ENCODE measurements at regions of chr9 and their contacts with region 1.

Region 1: DNA sequence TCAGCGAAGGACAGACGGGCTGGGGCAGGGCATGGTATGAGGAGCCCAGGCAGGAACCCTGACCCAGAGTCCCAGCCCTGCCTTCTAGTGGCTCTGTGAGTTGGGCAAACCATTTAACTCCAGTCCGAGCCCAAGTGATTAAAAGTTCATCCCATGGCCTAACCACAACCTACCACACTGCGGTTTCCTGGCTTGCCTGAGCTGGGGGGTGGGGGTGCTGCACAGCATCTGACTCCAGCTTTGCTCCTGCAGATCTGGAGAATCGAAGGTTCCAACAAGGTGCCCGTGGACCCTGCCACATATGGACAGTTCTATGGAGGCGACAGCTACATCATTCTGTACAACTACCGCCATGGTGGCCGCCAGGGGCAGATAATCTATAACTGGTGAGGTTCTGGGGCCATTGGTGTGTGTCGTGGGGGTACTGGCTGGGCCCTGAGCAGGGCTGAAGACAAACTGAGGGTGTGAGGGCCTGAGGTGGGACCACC is 49.0 kb downstream of the STOM start:
- DNase-seq: peak; percentile 38
- H3K4me3 Mint-ChIP-seq: no peak overlapping the region
- H3K27ac Mint-ChIP-seq: no peak overlapping the region
- H3K4me1 Mint-ChIP-seq: peaks cover 13% of the 10 kb centered on the region
- H3K27me3 Mint-ChIP-seq: no peaks in the 10 kb centered on the region

Region 2: DNA sequence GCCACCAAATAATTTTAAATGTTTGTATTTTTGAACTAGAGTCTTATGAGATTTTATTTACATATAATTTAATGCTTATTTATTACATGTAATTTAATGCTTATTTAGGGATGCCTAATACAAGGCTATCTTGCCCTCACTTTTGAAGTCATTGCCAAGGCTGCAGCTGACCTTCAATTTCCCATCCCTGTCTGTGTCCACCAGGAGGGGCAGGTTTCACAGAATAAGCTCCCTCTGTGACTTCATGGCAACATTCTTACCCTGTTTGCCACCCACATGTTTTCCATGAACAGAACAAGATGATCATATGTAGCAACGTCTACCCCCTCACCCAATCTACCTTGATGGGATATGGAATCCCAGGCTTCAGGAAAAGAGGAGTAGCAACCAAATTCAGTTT is 298.0 kb before region 1 on chr9:
- CTCF ChIA-PET with region 1: no interaction called
- intact Hi-C with region 1: no loop called
- DNase-seq: no peak
- H3K4me3 Mint-ChIP-seq: no peak overlapping the region
- H3K27ac Mint-ChIP-seq: no peak overlapping the region
- H3K4me1 Mint-ChIP-seq: no peaks in the 10 kb centered on the region
- H3K27me3 Mint-ChIP-seq: no peaks in the 10 kb centered on the region

Region 3: DNA sequence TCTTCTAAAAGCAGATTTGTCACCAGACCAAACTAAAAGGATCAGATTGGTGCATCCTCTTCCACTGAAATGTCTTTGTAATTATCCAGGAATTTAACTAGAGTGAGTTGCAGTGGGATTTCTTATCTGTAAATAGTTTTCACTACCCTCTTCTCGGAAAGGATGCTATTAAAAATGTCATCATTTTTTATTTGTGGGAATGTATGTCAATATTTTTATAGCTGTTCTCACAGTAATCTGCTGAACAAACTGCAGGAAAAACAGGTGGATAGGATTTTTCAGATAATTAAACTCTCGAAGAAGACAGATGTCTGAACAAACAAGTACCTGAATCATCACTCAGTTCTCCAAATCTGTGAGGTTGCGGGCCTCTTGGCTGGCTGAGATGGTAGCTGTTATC is 182.1 kb before region 1 on chr9:
- CTCF ChIA-PET with region 1: no interaction called
- intact Hi-C with region 1: no loop called
- DNase-seq: no peak
- H3K4me3 Mint-ChIP-seq: no peak overlapping the region
- H3K27ac Mint-ChIP-seq: no peak overlapping the region
- H3K4me1 Mint-ChIP-seq: peaks cover 7% of the 10 kb centered on the region
- H3K27me3 Mint-ChIP-seq: no peaks in the 10 kb centered on the region

Region 4: GRCh38 chr9:121286973-121287741 is 33.9 kb before region 1 on chr9:
- CTCF ChIA-PET with region 1: interaction called, 12 read pairs
- intact Hi-C with region 1: no loop called
- DNase-seq: peak; percentile 23
- H3K4me3 Mint-ChIP-seq: no peak overlapping the region
- H3K27ac Mint-ChIP-seq: no peak overlapping the region
- H3K4me1 Mint-ChIP-seq: peaks cover 12% of the 10 kb centered on the region
- H3K27me3 Mint-ChIP-seq: no peaks in the 10 kb centered on the region

Region 5: DNA sequence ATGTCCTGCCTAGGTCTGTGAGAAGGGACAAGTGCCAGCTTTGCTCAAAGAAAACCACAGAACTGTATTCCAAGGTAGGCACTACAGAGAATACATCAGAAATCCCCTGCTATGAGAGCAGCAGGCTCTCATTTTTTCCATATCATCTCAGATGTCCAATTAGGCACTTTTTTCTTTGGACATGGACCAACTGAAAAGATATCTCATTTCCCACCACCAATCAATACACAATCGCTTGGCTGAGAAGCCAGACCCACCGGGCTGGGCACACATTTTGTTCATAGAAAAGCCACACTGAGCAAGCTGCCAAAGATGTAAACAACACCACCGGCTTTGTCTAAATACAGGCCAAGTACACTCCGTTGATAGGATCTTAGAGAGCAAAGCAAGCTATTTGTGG is 23.1 kb after region 1 on chr9:
- CTCF ChIA-PET with region 1: interaction called, 18 read pairs
- intact Hi-C with region 1: no loop called
- DNase-seq: no peak
- H3K4me3 Mint-ChIP-seq: no peak overlapping the region
- H3K27ac Mint-ChIP-seq: no peak overlapping the region
- H3K4me1 Mint-ChIP-seq: no peaks in the 10 kb centered on the region
- H3K27me3 Mint-ChIP-seq: no peaks in the 10 kb centered on the region

Region 6: GRCh38 chr9:121369595-121370265 is 48.7 kb after region 1 on chr9 and contains the start of gene STOM:
- CTCF ChIA-PET with region 1: interaction called, 43 read pairs
- intact Hi-C with region 1: loop called (anchors 1 kb)
- DNase-seq: peak; percentile 74
- H3K4me3 Mint-ChIP-seq: peak within 1 kb of the TSS; percentile 82
- H3K27ac Mint-ChIP-seq: peak within 1 kb of the TSS; percentile 88
- H3K4me1 Mint-ChIP-seq: peaks cover 31% of the 10 kb centered on the region
- H3K27me3 Mint-ChIP-seq: no peaks in the 10 kb centered on the region
- total RNA-seq, gene STOM: 34.0 to 37.7 TPM

Region 7: DNA sequence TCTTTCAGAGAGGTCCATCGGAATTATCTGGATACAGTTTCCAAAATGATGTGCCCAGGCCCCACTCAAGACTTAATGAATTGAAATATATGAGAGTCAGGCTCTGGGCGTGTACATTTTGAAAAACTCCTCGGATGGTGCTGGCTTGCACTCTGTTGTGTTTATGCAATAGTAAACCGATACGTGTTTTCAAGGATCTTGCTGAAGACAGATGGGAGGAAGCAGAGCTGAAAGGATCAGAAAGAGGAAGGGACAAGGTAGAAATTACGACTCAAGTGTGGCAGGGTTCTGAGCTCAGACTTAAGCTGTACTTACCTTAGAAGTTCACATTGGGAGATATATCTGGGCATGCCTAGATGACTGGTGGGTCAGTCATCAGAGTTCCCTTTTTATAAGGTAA is 62.7 kb after region 1 on chr9:
- CTCF ChIA-PET with region 1: interaction called, 43 read pairs
- intact Hi-C with region 1: no loop called
- DNase-seq: no peak
- H3K4me3 Mint-ChIP-seq: no peak overlapping the region
- H3K27ac Mint-ChIP-seq: no peak overlapping the region
- H3K4me1 Mint-ChIP-seq: no peaks in the 10 kb centered on the region
- H3K27me3 Mint-ChIP-seq: peaks cover 2% of the 10 kb centered on the region

Region 8: DNA sequence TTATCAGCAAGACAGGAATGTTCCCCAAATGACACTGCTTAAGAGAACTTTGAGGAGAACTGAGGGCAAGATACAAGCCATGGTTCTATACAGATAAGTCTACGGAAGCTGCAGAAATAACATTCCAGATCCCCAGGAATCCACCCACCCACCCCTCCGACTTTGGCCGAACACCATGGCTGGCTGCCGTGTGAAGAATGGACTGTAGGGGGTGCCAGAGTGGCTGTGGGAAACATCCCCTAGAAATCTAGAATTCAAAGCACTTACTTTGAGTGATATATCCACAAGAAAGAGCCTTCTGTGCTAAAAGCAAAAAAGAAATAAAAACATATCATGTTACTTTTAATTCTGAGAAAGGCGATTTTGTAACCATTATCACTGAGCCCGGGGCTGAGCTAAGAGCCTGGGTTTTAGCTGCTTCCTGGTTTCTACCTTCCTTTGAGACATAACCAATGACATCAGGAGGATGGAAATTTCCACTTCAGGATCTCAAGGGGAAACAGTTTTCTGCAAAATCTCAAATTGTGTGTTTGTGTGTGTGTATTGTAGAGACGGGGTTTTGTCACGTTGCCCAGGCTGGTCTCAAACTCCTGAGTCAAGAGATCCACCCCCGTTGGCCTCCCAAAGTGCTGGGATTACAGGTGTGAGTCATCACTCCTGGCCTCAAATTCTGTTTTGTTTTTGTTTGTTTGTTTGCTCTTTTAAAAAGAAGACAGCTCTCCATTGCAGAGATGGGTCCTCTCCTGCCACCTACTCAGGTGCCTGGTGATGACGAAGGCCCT is 142.2 kb after region 1 on chr9:
- CTCF ChIA-PET with region 1: interaction called, 13 read pairs
- intact Hi-C with region 1: no loop called
- DNase-seq: peak; percentile 57
- H3K4me3 Mint-ChIP-seq: no peak overlapping the region
- H3K27ac Mint-ChIP-seq: no peak overlapping the region
- H3K4me1 Mint-ChIP-seq: peaks cover 3% of the 10 kb centered on the region
- H3K27me3 Mint-ChIP-seq: peaks cover 23% of the 10 kb centered on the region

Measured in activated naive CD4-positive, alpha-beta T cell treated with anti-CD3 and anti-CD28 coated beads for 36 hours (primary cell).